ENCODE measurements at regions of chr5 and their contacts with region 1.

Region 1: DNA sequence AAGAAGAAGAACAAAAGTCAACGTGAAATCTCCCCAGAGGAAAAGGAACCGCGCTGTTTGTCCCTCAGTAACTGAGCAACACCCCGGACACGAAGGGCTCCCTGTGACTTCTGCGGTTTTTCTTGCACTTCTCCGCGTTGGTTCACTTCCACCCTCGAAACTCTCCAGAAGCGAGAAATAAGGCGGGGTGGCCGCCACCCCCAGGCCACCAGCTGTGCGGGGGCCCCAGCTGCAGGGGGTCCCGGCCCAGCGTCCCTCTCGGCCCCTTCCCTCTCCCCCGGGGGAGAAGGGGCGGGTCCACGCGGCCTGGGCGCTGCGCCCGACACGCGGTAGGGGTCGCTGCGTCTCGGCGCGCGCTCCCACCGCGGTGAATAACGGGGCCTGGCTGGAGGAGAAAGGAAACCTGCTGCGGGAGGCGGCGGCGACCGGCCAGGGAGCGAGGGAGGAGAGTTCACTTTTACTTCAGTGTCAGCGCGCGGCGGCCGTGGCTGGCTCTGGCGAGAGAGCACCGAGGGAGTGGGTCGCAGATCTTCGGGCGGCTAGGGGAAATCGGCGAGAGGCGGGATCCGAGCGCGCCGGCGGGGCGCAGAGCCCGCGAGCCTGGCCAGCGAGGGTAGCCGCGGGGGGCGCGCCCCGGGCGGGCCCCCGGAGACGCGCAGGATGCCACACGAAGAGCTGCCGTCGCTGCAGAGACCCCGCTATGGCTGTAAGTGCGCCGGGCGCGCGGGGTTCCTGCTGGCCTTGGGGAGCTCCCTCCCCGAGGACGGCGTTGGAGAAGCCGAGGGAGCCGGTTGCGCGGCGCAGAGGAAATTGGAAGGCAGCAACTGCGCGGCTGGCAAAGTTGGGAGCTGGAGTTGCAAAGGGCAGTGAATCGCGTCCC is at the start of gene IQGAP2:
- DNase-seq: peak; percentile 87
- H3K4me3 Mint-ChIP-seq: peak within 1 kb of the TSS; percentile 98
- H3K27ac Mint-ChIP-seq: peak within 1 kb of the TSS; percentile 98
- H3K4me1 Mint-ChIP-seq: peaks cover 47% of the 10 kb centered on the region
- H3K27me3 Mint-ChIP-seq: no peaks in the 10 kb centered on the region
- total RNA-seq, gene IQGAP2: 92.7 to 93.0 TPM

Region 2: DNA sequence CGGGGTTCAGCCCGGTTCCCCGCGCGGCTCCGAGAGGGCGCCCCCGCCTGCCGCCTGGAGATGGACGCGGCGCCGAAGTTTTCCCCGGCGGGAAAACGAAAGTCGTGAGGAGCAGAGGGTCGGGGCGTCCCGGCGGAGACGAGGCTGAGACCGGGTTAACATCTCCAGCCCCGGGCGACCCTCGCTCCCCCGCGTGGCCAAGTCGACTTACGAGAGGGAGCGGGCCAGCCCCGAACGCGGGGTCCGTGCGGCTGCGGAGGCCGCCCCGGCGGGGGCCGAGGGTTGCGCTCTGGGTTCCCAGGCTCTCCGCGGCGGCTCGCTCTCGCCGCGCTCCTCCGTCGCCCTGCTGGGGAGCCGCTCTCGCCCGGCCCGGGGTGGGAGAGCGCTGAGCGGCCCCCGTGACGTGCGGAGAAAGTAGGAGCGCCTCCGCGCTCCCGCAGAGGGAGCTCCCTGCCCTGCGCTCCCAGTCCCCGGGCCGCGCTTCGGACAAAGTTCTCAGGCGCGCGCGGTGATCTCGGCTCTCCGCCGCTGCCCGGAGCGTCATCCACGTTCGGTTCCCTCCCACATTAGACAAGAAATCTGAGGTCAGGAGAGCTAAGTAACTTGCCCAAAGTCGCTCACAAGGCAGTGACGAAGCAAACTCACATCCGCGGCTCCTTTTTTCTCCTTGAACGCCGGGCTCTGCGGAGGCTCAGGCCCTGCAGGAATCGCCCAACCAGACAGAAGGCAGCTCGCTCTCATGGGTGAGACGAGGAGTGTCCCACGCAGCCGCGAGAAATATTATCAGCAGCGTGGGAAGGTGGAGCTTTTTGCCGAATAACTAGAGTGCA is 1349.6 kb before region 1 on chr5:
- CTCF ChIA-PET with region 1: no interaction called
- POLR2A ChIA-PET with region 1: no interaction called
- intact Hi-C with region 1: loop called (anchors 5 kb)
- DNase-seq: peak; percentile 71
- H3K4me3 Mint-ChIP-seq: peak overlapping the region; percentile 81
- H3K27ac Mint-ChIP-seq: peak overlapping the region; percentile 84
- H3K4me1 Mint-ChIP-seq: peaks cover 80% of the 10 kb centered on the region
- H3K27me3 Mint-ChIP-seq: peaks cover 4% of the 10 kb centered on the region

Region 3: DNA sequence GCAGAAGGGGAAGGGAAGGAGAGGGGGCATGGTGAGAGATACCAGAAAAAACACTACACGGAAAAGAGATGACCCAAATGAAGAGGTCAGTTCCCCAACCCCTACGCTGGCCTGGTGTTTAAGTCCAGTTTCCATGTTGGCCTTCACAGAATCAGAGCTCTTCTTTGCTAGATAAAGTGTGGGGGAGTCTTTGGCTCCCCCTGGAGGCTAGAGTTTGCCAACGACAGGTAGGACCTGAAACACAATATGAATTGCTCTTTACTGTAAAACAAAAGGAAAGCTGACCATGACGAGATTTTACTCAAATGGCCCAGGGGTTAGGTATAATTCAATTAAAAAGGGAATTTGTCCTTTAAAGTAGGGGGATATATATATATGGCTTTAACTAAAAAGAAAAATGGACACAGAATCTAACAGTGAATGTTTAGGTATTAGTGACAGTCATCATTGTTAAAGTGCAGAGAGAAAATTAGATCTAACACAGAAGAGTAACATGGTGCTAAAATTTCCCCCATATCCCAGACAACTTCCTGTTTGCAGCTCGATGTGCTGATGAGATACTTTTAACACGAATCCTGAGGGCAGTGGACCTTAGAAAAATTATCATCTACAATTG is 228.0 kb before region 1 on chr5:
- CTCF ChIA-PET with region 1: no interaction called
- POLR2A ChIA-PET with region 1: no interaction called
- intact Hi-C with region 1: loop called (anchors 5 kb)
- DNase-seq: peak; percentile 70
- H3K4me3 Mint-ChIP-seq: no peak overlapping the region
- H3K27ac Mint-ChIP-seq: no peak overlapping the region
- H3K4me1 Mint-ChIP-seq: peaks cover 34% of the 10 kb centered on the region
- H3K27me3 Mint-ChIP-seq: no peaks in the 10 kb centered on the region

Region 4: DNA sequence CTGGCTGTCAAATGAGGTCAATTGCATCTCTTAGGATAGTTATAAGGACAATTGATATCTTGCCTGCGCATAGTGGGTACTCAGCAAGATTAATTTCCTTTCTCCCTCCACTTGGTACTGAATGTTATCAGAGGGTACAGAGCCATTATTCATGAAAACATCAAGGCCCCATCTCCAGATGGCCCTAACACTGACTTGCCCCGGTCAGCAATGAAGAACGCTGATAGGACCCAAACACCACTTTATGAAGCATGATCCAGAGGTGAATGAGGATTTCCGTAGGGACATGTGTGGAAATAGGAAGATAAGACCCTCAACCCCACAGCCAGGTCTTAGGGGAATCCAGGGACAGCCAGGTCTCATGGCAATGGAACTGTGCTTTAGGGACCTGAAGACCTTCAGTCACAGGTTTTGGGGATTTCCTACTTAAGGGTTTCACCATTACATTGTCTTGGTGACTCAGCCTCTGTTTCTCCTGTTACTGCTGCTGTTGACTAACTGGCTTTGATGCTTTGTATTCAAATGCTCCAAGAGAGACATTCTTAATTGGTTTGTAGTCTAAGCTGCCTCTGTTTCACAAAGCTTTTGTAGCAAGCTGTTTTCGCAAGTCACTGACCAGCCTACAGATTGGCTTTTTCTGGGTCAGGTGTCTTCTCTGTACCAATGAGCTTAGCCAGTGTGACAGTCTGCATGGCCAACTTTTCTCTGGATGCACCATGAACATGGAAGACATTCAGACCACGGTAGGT is 35.3 kb before region 1 on chr5:
- CTCF ChIA-PET with region 1: interaction called, 3 read pairs
- POLR2A ChIA-PET with region 1: interaction called, 3 read pairs
- intact Hi-C with region 1: loop called (anchors 1 kb)
- DNase-seq: peak; percentile 62
- H3K4me3 Mint-ChIP-seq: peak overlapping the region; percentile 8
- H3K27ac Mint-ChIP-seq: peak overlapping the region; percentile 85
- H3K4me1 Mint-ChIP-seq: peaks cover 31% of the 10 kb centered on the region
- H3K27me3 Mint-ChIP-seq: no peaks in the 10 kb centered on the region

Region 5: DNA sequence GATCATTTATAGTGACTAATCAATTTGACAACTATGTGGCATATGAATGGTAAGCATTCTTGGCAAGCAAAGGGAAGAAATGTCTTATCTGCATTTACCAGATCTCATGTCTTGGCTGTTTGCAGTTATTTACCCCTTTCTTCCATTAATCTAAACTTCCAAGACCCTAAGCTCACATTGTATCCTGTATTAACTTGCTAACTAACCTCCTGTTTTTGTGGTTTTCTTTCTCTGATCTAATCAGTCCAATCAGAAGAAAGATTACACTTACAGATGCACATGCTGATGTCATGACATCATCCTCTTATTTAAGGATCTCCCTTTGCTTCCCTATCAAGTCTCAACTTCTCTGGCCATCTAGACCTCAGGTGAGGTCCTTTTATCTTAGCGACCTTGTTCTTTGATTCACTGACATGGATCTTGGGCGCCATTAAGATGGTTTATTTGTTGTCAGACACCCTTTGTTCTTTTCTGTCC is 124.6 kb after region 1 on chr5:
- CTCF ChIA-PET with region 1: interaction called, 18 read pairs
- POLR2A ChIA-PET with region 1: interaction called, 10 read pairs
- intact Hi-C with region 1: loop called (anchors 1 kb)
- DNase-seq: no peak
- H3K4me3 Mint-ChIP-seq: no peak overlapping the region
- H3K27ac Mint-ChIP-seq: peak overlapping the region; percentile 8
- H3K4me1 Mint-ChIP-seq: peaks cover 82% of the 10 kb centered on the region
- H3K27me3 Mint-ChIP-seq: no peaks in the 10 kb centered on the region

Region 6: DNA sequence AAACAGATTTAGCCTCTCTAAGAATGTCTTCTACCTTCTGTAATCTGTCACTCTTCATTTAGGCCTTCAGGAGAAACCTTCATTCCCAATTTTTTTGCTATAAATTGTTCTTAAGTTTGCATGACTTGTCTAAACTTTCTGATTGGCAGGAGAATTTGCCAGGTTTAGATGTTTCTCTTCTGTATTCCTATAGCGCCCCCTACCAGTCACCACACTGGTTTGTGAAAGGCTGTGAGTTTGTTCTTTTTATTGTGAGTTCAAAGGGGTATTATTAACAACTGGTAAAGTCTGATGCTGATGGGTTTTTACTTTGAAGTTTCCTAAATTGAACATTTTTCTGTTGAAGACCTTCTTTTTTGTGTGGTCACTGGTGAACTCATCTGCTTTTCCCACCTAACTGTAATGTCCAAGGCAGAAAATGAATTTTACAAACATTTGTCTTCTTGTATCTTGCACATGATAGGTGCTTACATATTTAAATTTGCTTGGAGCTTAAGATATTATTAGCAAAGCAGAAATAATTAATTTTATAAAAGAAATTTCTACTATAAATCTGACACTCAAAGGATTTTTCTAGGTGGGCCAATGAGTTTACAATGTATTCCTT is 238.5 kb after region 1 on chr5:
- CTCF ChIA-PET with region 1: interaction called, 3 read pairs
- POLR2A ChIA-PET with region 1: no interaction called
- intact Hi-C with region 1: loop called (anchors 5 kb)
- DNase-seq: peak; percentile 77
- H3K4me3 Mint-ChIP-seq: no peak overlapping the region
- H3K27ac Mint-ChIP-seq: no peak overlapping the region
- H3K4me1 Mint-ChIP-seq: peaks cover 4% of the 10 kb centered on the region
- H3K27me3 Mint-ChIP-seq: no peaks in the 10 kb centered on the region

Measured in activated CD4-positive, alpha-beta memory T cell treated with anti-CD3 and anti-CD28 coated beads for 36 hours (primary cell).